A673 (cell line): ENCODE measurements at regions of chr16 and their contacts with region 1.

Region 1: DNA sequence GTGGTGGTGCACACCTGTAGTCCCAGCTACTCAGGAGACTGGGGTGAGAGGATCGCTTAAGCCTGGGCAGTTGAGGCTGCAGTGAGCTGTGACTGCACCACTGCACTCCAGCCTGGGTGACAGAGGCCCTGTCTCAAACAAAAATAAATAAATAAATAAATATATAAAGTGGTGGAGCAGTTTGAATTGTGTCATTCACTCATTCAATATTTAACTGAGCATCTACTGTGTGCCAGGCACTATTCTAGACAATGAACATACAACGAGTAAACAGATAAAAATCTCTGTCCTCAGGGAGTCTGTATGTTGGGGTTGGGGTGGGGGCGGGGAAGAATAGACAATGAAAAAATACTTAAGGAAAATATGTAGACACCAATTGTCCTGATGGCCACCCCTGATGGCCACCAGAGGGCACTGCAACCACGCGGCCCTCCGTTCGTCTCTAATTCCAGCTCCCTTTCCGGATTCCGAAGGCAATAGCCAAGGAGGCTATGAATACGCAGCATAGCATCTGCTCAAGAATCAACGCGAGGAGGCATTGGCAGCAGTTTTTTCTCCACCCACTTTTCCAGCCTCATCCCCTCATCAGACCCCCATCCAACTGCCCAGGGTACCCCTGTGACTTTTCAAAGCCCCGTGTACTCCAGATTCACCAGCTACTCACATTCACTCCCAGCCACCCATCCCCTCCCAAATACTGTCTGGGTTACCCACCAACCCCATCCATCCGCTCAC is 21.4 kb downstream of the QPRT start:
- DNase-seq: peak; percentile 90
- H3K4me3 ChIP-seq: no peak overlapping the region
- H3K27ac ChIP-seq: no peak overlapping the region
- H3K4me1 ChIP-seq: peaks cover 13% of the 10 kb centered on the region
- H3K27me3 ChIP-seq: no peaks in the 10 kb centered on the region
- CTCF ChIP-seq: peak; percentile 84

Region 2: DNA sequence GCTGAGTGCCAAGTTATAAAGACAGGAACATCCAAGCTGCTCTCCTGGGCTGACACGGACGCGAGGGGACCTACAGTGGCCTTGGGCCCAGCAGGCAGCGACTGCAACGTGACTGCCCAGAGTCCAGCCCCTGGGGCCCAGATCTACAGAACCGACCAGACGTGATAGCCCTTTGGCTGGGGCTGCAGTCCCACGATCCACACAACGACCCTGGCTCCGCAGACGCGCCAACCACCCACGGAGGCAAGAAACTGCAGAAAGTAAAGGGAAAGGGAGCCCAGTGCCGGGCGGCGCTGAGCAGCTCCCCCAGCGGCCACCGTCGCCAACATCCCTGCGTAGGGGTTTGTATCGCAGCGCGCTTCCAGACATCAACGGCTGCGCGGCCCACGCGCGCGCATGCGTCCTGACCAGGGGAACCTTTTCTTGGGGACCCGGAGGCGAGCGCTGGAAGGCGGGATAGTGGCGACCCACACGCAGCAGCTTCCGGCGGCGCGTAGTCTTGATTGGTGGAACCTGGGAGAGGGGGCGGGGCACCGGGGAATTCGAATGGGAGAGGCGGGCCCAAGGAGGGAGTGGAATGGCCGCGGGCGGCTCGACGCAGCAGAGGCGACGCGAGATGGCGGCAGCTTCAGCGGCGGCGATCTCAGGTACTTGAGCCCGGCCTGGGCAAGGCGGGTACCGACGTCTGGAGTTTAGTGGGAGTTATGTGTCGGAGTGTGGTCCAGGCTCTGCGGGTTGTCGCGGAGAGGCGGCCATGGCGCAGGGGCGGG is 89.9 kb after region 1 on chr16 and contains the start of gene KIF22:
- CTCF ChIA-PET with region 1: no interaction called
- POLR2A ChIA-PET with region 1: no interaction called
- intact Hi-C with region 1: no loop called
- DNase-seq: peak; percentile 99
- H3K4me3 ChIP-seq: peak within 1 kb of the TSS; percentile 99
- H3K27ac ChIP-seq: peak within 1 kb of the TSS; percentile 90
- H3K4me1 ChIP-seq: peaks cover 11% of the 10 kb centered on the region
- H3K27me3 ChIP-seq: no peaks in the 10 kb centered on the region
- CTCF ChIP-seq: peak; percentile 85
- total RNA-seq, gene KIF22: 171 and 186 TPM in 2 replicates

Region 3: DNA sequence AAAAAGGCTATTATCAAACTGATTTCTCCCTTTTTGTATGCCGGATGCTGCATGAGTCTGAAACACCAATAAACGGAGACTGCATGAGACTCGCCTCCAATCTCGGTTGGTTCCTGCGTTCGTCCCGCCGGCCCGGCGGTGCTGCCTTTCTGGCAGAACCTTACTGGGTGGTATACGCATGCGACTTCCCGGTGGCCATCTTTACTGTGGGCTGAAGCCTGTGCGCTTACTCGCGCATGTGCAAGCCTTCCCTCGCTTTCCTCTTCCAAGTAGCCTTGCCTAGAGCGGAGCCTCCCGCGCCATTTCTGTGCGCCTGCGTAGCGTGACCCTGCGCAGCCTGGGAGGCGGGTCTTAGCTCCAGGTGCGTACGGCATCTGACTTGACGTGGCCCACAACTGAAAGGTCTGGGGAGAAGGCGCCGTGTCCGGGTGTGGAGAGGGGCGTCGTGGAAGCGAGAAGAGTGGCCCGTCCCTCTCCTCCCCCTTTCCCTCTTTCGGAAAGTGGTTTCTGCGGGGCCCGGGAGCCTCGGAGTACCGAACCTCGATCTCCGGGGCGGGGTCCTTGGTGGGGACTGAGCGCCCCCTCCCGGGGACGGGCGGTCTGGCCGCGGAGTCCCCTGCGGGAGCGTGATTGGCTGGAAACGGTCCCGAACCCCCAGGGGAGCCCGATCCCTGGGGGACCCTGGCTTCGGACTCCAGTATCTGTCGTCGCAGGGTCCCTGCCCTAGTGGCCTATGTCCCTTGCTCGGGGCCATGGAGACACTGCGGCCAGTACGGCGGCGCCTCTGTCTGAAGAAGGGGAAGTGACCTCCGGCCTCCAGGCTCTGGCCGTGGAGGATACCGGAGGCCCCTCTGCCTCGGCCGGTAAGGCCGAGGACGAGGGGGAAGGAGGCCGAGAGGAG is 115.6 kb after region 1 on chr16 and contains the start of gene PAGR1:
- CTCF ChIA-PET with region 1: no interaction called
- POLR2A ChIA-PET with region 1: no interaction called
- intact Hi-C with region 1: loop called (anchors 2 kb)
- DNase-seq: peak; percentile 99
- H3K4me3 ChIP-seq: peak within 1 kb of the TSS; percentile 87
- H3K27ac ChIP-seq: peak within 1 kb of the TSS; percentile 92
- H3K4me1 ChIP-seq: peaks cover 48% of the 10 kb centered on the region
- H3K27me3 ChIP-seq: no peaks in the 10 kb centered on the region
- CTCF ChIP-seq: peak; percentile 93
- total RNA-seq, gene PAGR1: 47.4 and 50.0 TPM in 2 replicates

Region 4: DNA sequence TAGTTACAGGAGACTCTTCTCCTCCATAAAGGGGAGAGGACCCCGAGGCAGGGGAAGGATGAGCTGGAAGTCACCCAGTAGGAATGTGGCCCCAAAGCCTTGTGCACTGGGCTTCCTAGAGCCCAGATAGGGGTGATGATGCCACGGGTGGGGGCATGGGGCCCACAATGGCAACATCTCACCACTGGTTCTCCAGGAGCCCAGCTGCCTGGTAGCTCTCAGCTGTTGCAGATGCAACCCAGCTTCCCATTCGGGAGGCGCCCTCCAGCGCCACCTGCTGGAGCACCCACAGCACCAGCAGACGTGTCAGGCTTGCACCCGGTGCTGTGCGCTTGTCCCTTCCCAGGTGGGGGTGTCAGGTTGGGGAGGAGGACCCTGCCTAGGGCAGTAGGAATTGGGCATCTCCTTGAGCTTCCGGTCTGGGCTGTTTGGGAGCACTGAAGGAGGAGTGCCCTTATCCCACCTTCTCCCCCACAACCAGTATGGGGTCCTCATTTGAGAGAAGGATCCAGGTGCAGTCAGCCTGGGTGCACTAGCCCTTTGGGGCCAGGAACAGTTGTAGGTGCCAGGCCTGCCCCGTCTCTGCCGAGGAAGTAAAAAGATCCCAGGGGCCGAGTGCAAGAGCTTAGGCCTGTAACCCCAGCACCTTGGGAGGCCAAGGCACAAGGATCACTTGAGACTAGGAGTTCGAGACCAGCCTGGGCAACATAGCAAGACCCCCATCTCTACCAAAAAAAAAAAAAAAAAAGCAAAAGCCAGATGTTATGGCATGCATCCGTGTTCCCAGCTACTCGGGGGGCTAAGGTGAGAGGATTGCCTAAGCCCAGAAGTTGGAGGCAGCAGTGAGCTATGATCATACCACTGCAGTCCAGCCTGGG is 148.2 kb after region 1 on chr16:
- CTCF ChIA-PET with region 1: interaction called, 11 read pairs
- POLR2A ChIA-PET with region 1: no interaction called
- intact Hi-C with region 1: no loop called
- DNase-seq: peak; percentile 72
- H3K4me3 ChIP-seq: no peak overlapping the region
- H3K27ac ChIP-seq: no peak overlapping the region
- H3K4me1 ChIP-seq: peaks cover 4% of the 10 kb centered on the region
- H3K27me3 ChIP-seq: no peaks in the 10 kb centered on the region
- CTCF ChIP-seq: peak; percentile 96

Region 5: GRCh38 chr16:30018731-30019158 is 318.3 kb after region 1 on chr16:
- CTCF ChIA-PET with region 1: interaction called, 6 read pairs
- POLR2A ChIA-PET with region 1: no interaction called
- intact Hi-C with region 1: loop called (anchors 2 kb)
- DNase-seq: no peak
- H3K4me3 ChIP-seq: no peak overlapping the region
- H3K27ac ChIP-seq: no peak overlapping the region
- H3K4me1 ChIP-seq: no peaks in the 10 kb centered on the region
- H3K27me3 ChIP-seq: no peaks in the 10 kb centered on the region
- CTCF ChIP-seq: no peak

Region 6: DNA sequence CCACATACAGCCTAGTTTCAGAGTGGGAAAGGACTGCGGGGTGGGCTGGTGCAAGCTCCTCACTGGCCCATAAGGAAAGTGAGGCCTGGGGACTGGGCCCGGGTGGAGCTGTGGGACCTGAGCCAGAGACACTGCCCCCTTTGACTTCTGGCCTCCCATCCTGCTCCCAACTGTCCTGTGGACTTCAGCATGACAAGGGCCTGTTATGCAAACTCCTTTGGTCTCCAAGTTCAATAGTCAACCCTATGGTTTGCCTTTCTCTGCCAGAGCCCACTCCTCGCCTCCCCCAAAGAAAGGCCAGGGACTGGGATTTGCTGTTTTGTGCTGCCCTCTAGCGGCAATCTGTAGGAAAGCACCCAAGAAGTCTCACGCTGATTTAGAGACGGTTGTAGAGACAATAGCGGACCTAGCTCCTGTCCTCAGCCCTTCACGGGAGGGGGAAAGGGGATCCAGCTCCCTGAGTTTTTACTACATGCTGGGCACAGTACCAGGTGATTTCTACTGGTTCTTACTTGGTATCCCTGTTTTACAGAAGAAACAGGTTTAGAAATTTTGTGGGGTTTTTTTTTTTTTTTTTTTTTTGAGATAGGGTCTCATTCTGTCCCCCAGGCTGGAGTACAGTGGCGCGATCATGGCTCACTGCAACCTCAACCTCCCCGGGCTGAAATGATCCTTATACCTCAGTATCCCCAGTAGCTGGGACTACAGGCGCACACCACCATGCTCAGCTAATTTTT is 331.8 kb after region 1 on chr16:
- CTCF ChIA-PET with region 1: interaction called, 11 read pairs
- POLR2A ChIA-PET with region 1: interaction called, 3 read pairs
- intact Hi-C with region 1: no loop called
- DNase-seq: peak; percentile 85
- H3K4me3 ChIP-seq: no peak overlapping the region
- H3K27ac ChIP-seq: no peak overlapping the region
- H3K4me1 ChIP-seq: no peaks in the 10 kb centered on the region
- H3K27me3 ChIP-seq: no peaks in the 10 kb centered on the region
- CTCF ChIP-seq: peak; percentile 94